Calu3 (cell line): ENCODE measurements at regions of chr14 and their contacts with region 1.

Region 1: GRCh38 chr14:29278301-29279263 is 512.0 kb downstream of the FOXG1 start:
- DNase-seq: no peak
- H3K4me3 Mint-ChIP-seq: no peak overlapping the region
- H3K27ac Mint-ChIP-seq: no peak overlapping the region
- H3K4me1 Mint-ChIP-seq: no peaks in the 10 kb centered on the region
- H3K27me3 Mint-ChIP-seq: no peaks in the 10 kb centered on the region
- CTCF ChIP-seq: no peak

Region 2: GRCh38 chr14:29242755-29243754 is 35.5 kb before region 1 on chr14:
- CTCF ChIA-PET with region 1: no interaction called
- intact Hi-C with region 1: loop called (anchors 2 kb)
- DNase-seq: no peak
- H3K4me3 Mint-ChIP-seq: no peak overlapping the region
- H3K27ac Mint-ChIP-seq: no peak overlapping the region
- H3K4me1 Mint-ChIP-seq: peaks cover 9% of the 10 kb centered on the region
- H3K27me3 Mint-ChIP-seq: no peaks in the 10 kb centered on the region
- CTCF ChIP-seq: no peak